ENCODE measurements at regions of chr11 and their contacts with region 1.

Region 1: DNA sequence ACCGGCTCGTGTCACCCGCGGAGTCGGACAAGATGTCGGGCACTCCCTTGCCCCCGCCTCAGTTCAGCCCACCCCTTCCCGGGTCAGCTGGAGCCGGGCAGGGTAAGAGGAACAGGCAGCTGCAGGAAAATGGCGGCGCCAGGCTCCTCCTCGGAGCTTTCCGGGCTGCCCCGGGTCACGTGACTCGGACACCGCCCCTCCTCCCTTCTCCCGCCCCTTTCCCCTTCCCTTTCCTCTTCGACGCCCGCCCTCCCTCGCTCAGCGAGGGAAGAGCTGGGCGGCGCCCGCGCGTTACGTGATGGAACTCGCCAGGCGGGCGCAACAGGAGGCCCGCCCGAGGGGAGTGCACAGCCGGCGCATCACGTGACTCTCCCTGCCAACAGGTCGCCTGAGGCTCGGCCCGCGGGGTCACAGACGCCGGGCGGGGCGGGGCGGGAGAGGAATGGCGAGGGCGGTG is at the start of gene PICALM:
- DNase-seq: peak; percentile 93 to 98 (median 97)
- H3K4me3 ChIP-seq: peak within 1 kb of the TSS; percentile 61 to 100 (median 93)
- H3K27ac ChIP-seq: peak within 1 kb of the TSS; percentile 91 to 99 (median 98)
- H3K27me3 ChIP-seq: no peaks in the 10 kb centered on the region
- CTCF ChIP-seq: peak in 35 of 56 donors; percentile 12 to 64 (median 34)
- total RNA-seq, gene PICALM: 218 to 547 (median 291) TPM

Region 2: DNA sequence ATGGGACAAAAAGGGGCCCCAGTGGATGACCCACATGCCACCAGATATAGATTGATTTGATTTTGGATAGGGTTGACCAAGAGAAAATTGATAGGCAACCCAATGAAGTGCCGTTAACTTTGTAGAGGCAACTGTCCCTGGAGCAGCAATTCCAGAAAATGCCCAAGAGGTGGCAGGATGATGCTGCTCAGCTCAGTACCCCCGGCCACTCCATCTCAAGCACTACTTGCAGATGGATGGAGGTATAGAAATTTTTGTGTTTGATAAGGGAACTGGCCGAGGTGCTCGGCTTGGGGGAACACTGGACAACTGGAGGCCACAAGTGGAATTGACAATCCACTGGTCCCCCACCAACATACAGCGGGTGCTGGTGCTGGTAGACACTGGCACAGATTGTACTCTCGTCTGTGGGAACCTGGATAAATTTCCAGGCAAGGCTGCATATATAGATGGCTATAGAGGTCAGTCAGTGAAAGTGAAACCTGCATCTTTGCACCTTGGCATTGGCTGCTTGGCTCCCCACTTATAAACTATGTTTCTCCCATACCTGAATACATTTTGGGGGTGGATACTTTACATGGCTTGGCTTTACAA is 127.5 kb before region 1 on chr11:
- intact Hi-C with region 1: loop called (anchors 2 to 10 kb)
- DNase-seq: peak in 9 of 10 donors; percentile 36 to 72 (median 60)
- H3K4me3 ChIP-seq: no peak overlapping the region
- H3K27ac ChIP-seq: no peak overlapping the region
- H3K27me3 ChIP-seq: no peaks in the 10 kb centered on the region
- CTCF ChIP-seq: peak; percentile 55 to 92 (median 79)

Region 3: GRCh38 chr11:86041975-86042378 is 27.0 kb before region 1 on chr11:
- intact Hi-C with region 1: loop called in 1 of 2 experiments (anchors 2 kb)
- DNase-seq: peak in 3 of 10 donors; percentile 19 to 56 (median 51)
- H3K4me3 ChIP-seq: peak overlapping the region in 55 of 59 donors; percentile 1 to 55 (median 33)
- H3K27ac ChIP-seq: peak overlapping the region in 58 of 59 donors; percentile 17 to 96 (median 88)
- H3K27me3 ChIP-seq: no peaks in the 10 kb centered on the region
- CTCF ChIP-seq: peak; percentile 81 to 98 (median 93)

Region 4: DNA sequence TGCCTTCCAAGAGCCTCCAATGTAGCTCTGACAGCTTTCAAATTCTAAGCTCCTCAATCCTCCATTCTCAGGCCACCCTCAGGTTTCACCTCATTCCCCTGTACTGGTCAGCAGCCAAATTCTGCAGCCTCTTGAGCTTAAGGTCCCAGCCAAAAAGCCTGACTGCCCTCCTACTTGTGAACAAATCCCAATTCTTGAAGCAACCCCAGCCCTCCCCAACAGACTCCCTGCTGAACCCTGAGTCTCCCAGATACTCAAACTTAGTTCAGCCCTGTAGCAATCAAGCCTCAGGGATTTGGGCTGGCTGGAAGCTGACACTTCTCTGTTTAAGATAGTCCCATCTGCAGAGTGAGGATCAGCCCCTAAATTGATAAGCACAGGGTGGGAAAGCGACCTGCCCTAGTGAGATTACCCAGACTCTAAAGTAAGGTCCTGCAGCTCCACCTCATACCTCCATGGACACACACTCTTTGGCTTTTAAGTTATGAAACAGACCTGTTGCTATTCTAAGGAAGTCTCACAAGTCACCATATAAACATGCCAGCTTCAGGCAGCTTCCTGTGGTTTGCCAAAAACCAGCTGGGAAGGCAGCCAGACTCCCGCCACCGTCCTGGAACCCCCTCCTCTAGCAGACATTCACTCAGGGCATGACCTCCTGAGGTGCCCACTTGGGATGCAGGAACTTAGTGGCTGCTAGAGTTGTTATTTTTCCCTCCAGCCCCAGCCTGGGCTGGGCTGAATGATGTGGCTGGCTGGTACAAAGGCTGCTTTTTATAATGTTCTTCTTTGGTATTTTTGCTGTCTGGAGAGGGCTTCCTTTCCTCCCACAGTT is 82.4 kb after region 1 on chr11:
- intact Hi-C with region 1: loop called (anchors 1 to 2 kb)
- DNase-seq: peak in 9 of 10 donors; percentile 32 to 66 (median 52)
- H3K4me3 ChIP-seq: peak overlapping the region in 33 of 59 donors; percentile 1 to 50 (median 27)
- H3K27ac ChIP-seq: peak overlapping the region; percentile 46 to 98 (median 96)
- H3K27me3 ChIP-seq: no peaks in the 10 kb centered on the region
- CTCF ChIP-seq: no peak

Region 5: DNA sequence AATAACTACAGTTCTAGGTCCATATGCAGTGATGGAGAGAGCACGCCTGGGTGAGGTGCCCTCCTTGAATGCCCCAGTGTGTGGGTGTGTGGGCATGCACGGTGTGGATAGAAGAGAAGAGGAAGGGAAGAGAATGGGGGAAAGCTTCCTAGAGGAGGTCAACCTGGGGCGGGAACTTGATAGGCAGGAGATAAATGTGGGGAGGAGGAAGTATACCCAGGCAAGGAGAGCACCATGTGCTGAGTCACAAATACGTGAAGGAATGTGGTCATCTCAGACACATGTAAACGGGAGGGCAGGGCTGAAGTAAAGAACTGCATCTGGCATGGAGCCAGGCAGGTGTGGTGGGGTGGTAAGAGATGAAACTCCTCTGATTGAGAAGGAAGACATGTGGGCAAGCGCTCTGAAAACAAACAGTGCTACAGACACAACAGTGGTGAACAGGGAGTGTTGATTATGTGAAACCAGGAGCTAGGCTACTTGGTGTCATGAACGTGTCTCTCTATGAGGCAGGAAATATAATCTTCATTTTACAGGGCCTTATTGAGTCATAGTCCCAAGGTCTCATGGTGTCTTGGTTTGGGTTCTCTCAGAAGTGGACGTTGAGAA is 114.1 kb after region 1 on chr11:
- intact Hi-C with region 1: no loop called
- DNase-seq: no peak
- H3K4me3 ChIP-seq: no peak overlapping the region
- H3K27ac ChIP-seq: no peak overlapping the region
- H3K27me3 ChIP-seq: no peaks in the 10 kb centered on the region
- CTCF ChIP-seq: no peak

Region 6: GRCh38 chr11:86218125-86219084 is 149.4 kb after region 1 on chr11:
- intact Hi-C with region 1: loop called in 1 of 2 experiments (anchors 10 kb)
- DNase-seq: peak; percentile 46 to 72 (median 60)
- H3K4me3 ChIP-seq: peak overlapping the region in 58 of 59 donors; percentile 2 to 64 (median 42)
- H3K27ac ChIP-seq: peak overlapping the region in 40 of 59 donors; percentile 5 to 80 (median 52)
- H3K27me3 ChIP-seq: no peaks in the 10 kb centered on the region
- CTCF ChIP-seq: peak; percentile 63 to 95 (median 89)

Measured in dorsolateral prefrontal cortex (tissue), 120 donors.